Posterior vena cava (tissue), 2 donors: ENCODE measurements at regions of chr12 and their contacts with region 1.

Region 1: GRCh38 chr12:124538194-124539082 is 29.0 kb downstream of the NCOR2 start:
- DNase-seq: no peak

Region 2: DNA sequence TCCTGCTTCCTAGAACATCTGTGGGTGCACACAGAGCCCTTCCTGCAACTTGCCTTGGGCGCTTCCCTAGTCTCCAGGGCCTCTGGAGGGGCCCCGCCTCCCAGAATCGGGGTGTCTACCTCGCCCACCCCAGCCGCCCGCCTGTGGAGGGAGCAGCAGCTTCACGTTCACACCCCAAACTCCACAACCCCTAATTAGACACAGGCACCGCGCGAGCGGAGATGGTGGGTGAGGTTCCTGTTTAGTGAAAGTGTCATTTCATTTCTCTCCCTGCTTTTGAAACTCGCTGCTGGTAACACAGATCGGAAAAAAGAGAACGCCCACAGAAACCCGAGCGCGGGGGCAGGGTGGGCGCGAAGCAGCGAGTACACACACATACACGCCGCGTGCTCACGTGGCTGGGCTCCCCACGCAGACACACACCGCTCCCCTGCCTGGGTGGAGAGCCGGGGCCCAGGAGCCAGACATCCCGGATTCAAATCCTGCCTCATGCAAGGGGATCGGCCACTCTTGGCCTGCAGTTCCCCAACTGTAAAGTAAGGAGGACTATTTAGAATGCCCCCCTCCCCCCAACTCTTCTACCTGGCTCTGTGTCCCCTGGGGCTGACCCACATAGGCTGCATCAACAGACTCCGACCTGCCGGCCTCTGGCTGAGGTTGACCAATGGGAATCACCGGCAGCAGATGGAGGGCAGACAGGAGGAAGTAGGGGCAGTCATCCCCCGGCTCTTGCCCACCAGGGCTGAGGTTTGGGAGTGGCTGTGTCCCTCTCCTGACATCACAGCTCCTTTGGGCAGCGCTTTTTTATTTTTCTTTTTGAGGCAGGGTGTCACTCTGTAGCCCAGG is 108.2 kb after region 1 on chr12:
- intact Hi-C with region 1: no loop called
- DNase-seq: no peak

Region 3: GRCh38 chr12:124661341-124661740 is 122.9 kb after region 1 on chr12:
- intact Hi-C with region 1: loop called in 1 of 2 experiments (anchors 1 kb)
- DNase-seq: no peak

Region 4: GRCh38 chr12:125038976-125039625 is 500.7 kb after region 1 on chr12:
- intact Hi-C with region 1: no loop called
- DNase-seq: no peak